CD8-positive, alpha-beta memory T cell (primary cell): ENCODE measurements at regions of chr17 and their contacts with region 1.

Region 1: DNA sequence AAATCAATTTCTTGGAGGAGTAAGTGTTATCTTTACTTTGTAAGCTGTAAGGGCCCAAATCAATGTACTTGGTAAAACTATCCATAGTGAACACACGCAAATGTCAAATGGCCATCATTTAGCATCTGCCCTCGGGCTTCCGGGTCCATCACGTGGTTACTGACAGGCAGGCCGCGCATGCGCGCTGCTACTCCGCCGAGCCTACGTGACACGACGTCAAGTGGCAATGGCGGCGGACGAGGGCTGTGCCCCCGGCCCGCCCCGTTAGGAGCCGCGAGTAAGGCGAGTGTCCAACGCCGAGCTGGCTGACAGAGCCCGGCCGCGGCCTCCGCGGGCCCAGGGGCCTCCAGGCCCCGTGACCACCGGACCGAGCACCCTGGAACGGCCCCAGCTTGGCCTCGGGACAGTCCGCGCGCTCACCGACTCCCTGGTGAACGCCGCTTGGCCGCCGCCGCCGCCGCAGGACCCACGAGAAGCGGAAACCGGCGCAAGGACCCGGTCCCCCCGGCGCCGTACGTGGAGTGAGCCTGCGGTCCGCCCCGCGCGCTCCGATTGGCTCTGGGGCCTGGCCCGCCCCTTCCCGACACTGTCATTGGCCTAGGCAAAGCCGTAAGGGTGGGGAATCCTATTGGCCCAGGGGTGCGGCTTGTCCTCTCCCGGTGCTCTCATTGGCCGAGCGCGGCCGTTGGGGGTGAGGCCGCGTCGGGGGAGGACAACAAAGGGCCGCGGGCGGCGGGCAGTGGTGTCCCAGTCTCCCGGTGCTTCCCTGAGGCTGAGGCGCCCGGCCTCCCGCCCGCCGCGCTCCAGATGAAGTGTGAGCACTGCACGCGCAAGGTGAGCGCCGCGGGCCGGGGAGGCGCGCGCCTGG is at the start of gene NARF:
- DNase-seq: peak; percentile 93 to 98 (median 96)
- H3K4me3 ChIP-seq: peak within 1 kb of the TSS; percentile 55
- H3K4me3 Mint-ChIP-seq: peak within 1 kb of the TSS; percentile 82 to 97 (median 89)
- H3K27ac ChIP-seq: peak within 1 kb of the TSS; percentile 94
- H3K27ac Mint-ChIP-seq: peak within 1 kb of the TSS; percentile 87 to 98 (median 97)
- H3K4me1 ChIP-seq: peaks cover 18% of the 10 kb centered on the region
- H3K4me1 Mint-ChIP-seq: peaks cover 26 to 38% (median 27%) of the 10 kb centered on the region in 3 donors
- H3K27me3 ChIP-seq: no peaks in the 10 kb centered on the region
- H3K27me3 Mint-ChIP-seq: peaks cover 0 to 1% of the 10 kb centered on the region in 2 donors
- total RNA-seq, gene NARF: 62.2 to 63.0 TPM

Region 2: GRCh38 chr17:82129095-82129494 is 329.1 kb before region 1 on chr17:
- CTCF ChIA-PET with region 1: no interaction called
- POLR2A ChIA-PET with region 1: no interaction called
- DNase-seq: no peak
- H3K4me3 ChIP-seq: no peak overlapping the region
- H3K4me3 Mint-ChIP-seq: no peak overlapping the region
- H3K27ac ChIP-seq: no peak overlapping the region
- H3K27ac Mint-ChIP-seq: peak overlapping the region; percentile 37 to 98 (median 84)
- H3K4me1 ChIP-seq: peaks cover 55% of the 10 kb centered on the region
- H3K4me1 Mint-ChIP-seq: peaks cover 30 to 46% (median 36%) of the 10 kb centered on the region in 3 donors
- H3K27me3 ChIP-seq: no peaks in the 10 kb centered on the region
- H3K27me3 Mint-ChIP-seq: peaks cover 0 to 1% of the 10 kb centered on the region in 2 donors

Region 3: GRCh38 chr17:82434216-82434565 is 24.0 kb before region 1 on chr17:
- CTCF ChIA-PET with region 1: no interaction called
- POLR2A ChIA-PET with region 1: no interaction called
- DNase-seq: peak in 2 of 5 donors; percentile 19 to 57
- H3K4me3 ChIP-seq: no peak overlapping the region
- H3K4me3 Mint-ChIP-seq: no peak overlapping the region
- H3K27ac ChIP-seq: no peak overlapping the region
- H3K27ac Mint-ChIP-seq: peak overlapping the region in 3 of 8 donors; percentile 32 to 38 (median 36)
- H3K4me1 ChIP-seq: peaks cover 9% of the 10 kb centered on the region
- H3K4me1 Mint-ChIP-seq: peaks cover 11 to 22% (median 20%) of the 10 kb centered on the region in 3 donors
- H3K27me3 ChIP-seq: no peaks in the 10 kb centered on the region
- H3K27me3 Mint-ChIP-seq: peaks cover 0 to 2% of the 10 kb centered on the region in 2 donors

Region 4: DNA sequence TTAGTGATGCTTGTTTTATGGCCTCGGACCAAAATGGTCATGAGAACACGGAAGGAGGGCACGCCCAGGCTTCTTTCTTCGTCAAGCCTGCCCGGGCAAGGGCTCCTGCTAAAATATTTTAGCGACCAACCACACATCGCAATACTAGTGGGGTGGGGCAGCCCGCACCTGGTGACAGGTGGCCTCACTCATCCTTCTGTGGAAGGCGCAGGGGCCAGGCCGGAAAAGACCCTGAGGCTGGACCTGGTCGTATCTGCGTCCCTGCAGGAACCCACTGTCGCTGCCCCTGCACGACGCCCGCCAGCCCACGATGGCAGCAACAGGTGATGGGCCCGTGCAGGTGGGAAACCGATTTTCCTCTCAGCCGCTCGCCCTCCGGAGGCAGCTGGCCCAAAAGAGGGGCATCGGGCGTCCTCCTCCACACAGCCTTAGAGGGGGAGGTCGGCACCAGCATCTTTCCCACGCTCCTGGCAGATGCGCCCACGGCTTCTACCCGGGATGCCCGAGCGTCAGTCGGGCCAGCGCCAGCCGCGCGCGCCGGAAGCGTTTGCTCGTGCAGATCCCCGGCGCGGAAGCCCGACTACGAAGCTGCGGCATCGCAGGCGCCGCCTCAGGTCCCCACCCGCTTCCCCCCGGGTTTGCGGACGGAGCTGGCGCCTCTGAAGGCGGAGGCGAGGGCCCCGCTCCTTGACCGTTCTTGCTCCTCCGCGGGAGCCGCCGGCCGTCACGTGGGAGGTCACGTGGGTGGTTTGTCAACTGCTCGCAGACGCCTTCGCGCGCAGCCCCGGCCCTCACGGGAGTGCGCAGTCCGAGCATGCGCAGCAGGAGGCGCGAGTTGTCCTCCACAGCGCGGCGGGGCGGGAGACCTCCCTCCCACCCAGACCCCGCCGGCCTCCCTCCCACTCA is 38.6 kb after region 1 on chr17:
- CTCF ChIA-PET with region 1: no interaction called
- POLR2A ChIA-PET with region 1: interaction called, 11 read pairs
- DNase-seq: peak; percentile 83 to 92 (median 86)
- H3K4me3 ChIP-seq: peak overlapping the region; percentile 66
- H3K4me3 Mint-ChIP-seq: peak overlapping the region; percentile 68 to 92 (median 76)
- H3K27ac ChIP-seq: peak overlapping the region; percentile 51
- H3K27ac Mint-ChIP-seq: peak overlapping the region; percentile 66 to 96 (median 83)
- H3K4me1 ChIP-seq: peaks cover 11% of the 10 kb centered on the region
- H3K4me1 Mint-ChIP-seq: peaks cover 17 to 36% (median 22%) of the 10 kb centered on the region in 3 donors
- H3K27me3 ChIP-seq: no peaks in the 10 kb centered on the region
- H3K27me3 Mint-ChIP-seq: peaks cover 0 to 8% of the 10 kb centered on the region in 2 donors

Region 5: DNA sequence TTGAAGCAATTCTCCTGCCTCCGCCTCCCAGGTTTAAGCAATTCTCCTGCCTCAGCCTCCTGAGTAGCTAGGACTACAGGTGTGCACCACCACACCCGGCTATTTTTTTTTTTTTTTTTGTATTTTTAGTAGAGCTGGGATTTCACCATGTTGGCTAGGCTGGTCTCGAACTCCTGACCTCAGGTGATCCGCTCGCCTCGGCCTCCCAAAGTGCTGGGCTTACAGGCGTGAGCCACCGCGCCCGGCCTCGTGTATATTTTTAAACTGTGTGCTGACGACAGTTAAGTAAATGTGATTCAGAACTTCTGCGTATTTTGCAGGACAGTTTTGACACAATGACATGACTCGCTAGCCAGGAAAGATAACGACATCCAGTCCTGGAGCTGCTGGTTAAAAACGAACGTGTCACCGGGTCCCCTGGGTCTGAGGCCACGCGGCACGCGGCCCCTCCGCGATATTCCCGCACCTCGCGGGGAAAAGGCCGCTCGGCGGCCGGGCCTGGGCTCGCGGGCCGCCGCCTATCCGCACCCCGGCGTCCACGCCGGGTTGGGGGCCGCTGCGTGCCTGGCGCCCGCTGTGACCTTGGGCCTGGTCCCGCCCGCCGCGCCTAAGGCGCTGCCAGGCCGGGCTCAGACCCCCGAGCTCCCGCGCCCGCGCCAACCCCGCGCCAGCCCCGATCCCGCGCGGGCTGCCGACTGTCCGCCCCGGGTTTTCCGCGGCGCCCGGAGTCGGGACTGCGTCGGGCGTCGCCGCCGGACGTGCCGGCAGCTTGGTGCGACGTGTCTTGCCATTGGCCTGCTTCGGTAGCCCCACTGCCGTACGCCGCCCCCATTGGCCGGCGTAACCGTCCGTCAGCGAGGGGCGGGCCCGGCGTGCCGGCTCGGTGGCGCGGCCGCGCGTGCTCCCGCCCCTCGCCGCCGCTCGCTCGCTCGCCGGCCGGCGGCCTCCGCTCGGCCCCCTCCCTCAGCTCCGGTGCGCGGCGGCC is 60.9 kb after region 1 on chr17 and contains the start of gene FOXK2:
- CTCF ChIA-PET with region 1: no interaction called
- POLR2A ChIA-PET with region 1: interaction called, 10 read pairs
- DNase-seq: peak; percentile 91 to 96 (median 94)
- H3K4me3 ChIP-seq: peak within 1 kb of the TSS; percentile 62
- H3K4me3 Mint-ChIP-seq: peak within 1 kb of the TSS; percentile 85 to 97 (median 93)
- H3K27ac ChIP-seq: peak within 1 kb of the TSS; percentile 84
- H3K27ac Mint-ChIP-seq: peak within 1 kb of the TSS; percentile 84 to 97 (median 90)
- H3K4me1 ChIP-seq: peaks cover 13% of the 10 kb centered on the region
- H3K4me1 Mint-ChIP-seq: peaks cover 20 to 32% (median 32%) of the 10 kb centered on the region in 3 donors
- H3K27me3 ChIP-seq: no peaks in the 10 kb centered on the region
- H3K27me3 Mint-ChIP-seq: no peaks in the 10 kb centered on the region
- total RNA-seq, gene FOXK2: 63.9 to 71.2 TPM